ENCODE measurements at regions of chr4 and their contacts with region 1.

Region 1: GRCh38 chr4:3106339-3107186 is 32.1 kb downstream of the HTT start:
- DNase-seq: peak; percentile 43 to 91 (median 69)
- ATAC-seq: peak; percentile 100
- H3K4me3 ChIP-seq: no peak overlapping the region
- H3K4me3 Mint-ChIP-seq: no peak overlapping the region
- H3K27ac ChIP-seq: no peak overlapping the region
- H3K27ac Mint-ChIP-seq: peak overlapping the region in 4 of 9 donors; percentile 38 to 77 (median 56)
- H3K4me1 ChIP-seq: no peaks in the 10 kb centered on the region
- H3K4me1 Mint-ChIP-seq: peaks cover 5 to 19% (median 10%) of the 10 kb centered on the region in 7 donors
- H3K27me3 ChIP-seq: no peaks in the 10 kb centered on the region
- H3K27me3 Mint-ChIP-seq: no peaks in the 10 kb centered on the region

Region 2: DNA sequence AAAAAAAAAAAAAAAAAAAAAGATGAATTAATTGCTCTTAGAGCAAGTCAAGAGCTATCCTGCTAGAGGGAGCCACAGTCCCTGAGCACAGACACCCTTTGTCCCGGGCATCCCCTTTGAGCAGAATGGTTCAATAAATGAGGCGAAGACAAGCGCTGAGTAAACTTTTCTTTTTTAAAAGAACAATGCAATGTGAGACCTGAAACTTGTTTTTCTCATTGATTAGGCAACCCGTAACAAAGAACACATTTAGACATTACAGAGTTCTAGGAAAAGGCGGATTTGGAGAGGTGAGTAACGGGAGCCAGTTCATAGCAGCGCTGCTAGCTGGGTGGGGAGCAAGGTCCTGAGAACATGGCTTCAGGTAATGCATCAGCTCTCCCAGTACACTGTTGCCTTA is 97.1 kb before region 1 on chr4:
- CTCF ChIA-PET with region 1: no interaction called
- POLR2A ChIA-PET with region 1: no interaction called
- intact Hi-C with region 1: no loop called
- DNase-seq: no peak
- ATAC-seq: peak; percentile 37
- H3K4me3 ChIP-seq: no peak overlapping the region
- H3K4me3 Mint-ChIP-seq: no peak overlapping the region
- H3K27ac ChIP-seq: no peak overlapping the region
- H3K27ac Mint-ChIP-seq: no peak overlapping the region
- H3K4me1 ChIP-seq: no peaks in the 10 kb centered on the region
- H3K4me1 Mint-ChIP-seq: peaks cover 0 to 12% (median 0%) of the 10 kb centered on the region in 7 donors
- H3K27me3 ChIP-seq: no peaks in the 10 kb centered on the region
- H3K27me3 Mint-ChIP-seq: peaks cover 0 to 4% (median 0%) of the 10 kb centered on the region in 5 donors

Region 3: GRCh38 chr4:3047464-3048286 is 58.9 kb before region 1 on chr4:
- CTCF ChIA-PET with region 1: no interaction called
- POLR2A ChIA-PET with region 1: no interaction called
- intact Hi-C with region 1: loop called (anchors 1 kb)
- DNase-seq: peak; percentile 40 to 75 (median 58)
- ATAC-seq: peak; percentile 79
- H3K4me3 ChIP-seq: peak overlapping the region; percentile 65
- H3K4me3 Mint-ChIP-seq: peak overlapping the region; percentile 62 to 92 (median 83)
- H3K27ac ChIP-seq: peak overlapping the region; percentile 61
- H3K27ac Mint-ChIP-seq: peak overlapping the region; percentile 79 to 90 (median 84)
- H3K4me1 ChIP-seq: peaks cover 16 to 18% of the 10 kb centered on the region in 2 donors
- H3K4me1 Mint-ChIP-seq: peaks cover 17 to 45% (median 35%) of the 10 kb centered on the region in 7 donors
- H3K27me3 ChIP-seq: no peaks in the 10 kb centered on the region
- H3K27me3 Mint-ChIP-seq: peaks cover 0 to 17% (median 0%) of the 10 kb centered on the region in 5 donors

Region 4: GRCh38 chr4:3136453-3136852 is 29.9 kb after region 1 on chr4:
- CTCF ChIA-PET with region 1: interaction called, 3 read pairs
- POLR2A ChIA-PET with region 1: no interaction called
- intact Hi-C with region 1: loop called (anchors 1 kb)
- DNase-seq: peak in 2 of 9 donors; percentile 4 to 11
- ATAC-seq: no peak
- H3K4me3 ChIP-seq: no peak overlapping the region
- H3K4me3 Mint-ChIP-seq: no peak overlapping the region
- H3K27ac ChIP-seq: no peak overlapping the region
- H3K27ac Mint-ChIP-seq: no peak overlapping the region
- H3K4me1 ChIP-seq: no peaks in the 10 kb centered on the region
- H3K4me1 Mint-ChIP-seq: peaks cover 0 to under 1% (median 0%) of the 10 kb centered on the region in 7 donors
- H3K27me3 ChIP-seq: no peaks in the 10 kb centered on the region
- H3K27me3 Mint-ChIP-seq: no peaks in the 10 kb centered on the region

Region 5: DNA sequence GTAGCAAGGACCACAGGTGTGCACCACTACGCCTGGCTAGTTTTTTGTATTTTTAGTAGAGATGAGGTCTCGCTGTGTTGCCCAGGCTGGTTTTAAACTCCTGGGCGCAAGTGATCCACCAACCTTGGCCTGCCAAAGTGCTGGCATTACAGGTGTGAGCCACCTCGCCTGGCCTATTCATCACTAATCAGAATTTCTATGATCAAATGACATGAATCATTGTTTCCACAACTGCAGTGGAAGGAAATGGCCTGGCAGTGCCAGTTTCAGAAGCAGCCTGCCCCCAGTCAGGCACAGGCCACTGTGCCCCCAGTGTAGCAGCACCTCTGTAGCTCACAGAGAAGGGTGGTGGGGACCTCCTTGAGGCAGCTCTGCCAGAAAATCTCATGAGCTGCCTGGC is 76.4 kb after region 1 on chr4:
- CTCF ChIA-PET with region 1: no interaction called
- POLR2A ChIA-PET with region 1: no interaction called
- intact Hi-C with region 1: no loop called
- DNase-seq: no peak
- ATAC-seq: no peak
- H3K4me3 ChIP-seq: no peak overlapping the region
- H3K4me3 Mint-ChIP-seq: no peak overlapping the region
- H3K27ac ChIP-seq: no peak overlapping the region
- H3K27ac Mint-ChIP-seq: no peak overlapping the region
- H3K4me1 ChIP-seq: no peaks in the 10 kb centered on the region
- H3K4me1 Mint-ChIP-seq: peaks cover 0 to 11% (median 0%) of the 10 kb centered on the region in 7 donors
- H3K27me3 ChIP-seq: no peaks in the 10 kb centered on the region
- H3K27me3 Mint-ChIP-seq: no peaks in the 10 kb centered on the region

Region 6: GRCh38 chr4:3193531-3194203 is 87.1 kb after region 1 on chr4:
- CTCF ChIA-PET with region 1: interaction called, 7 read pairs
- POLR2A ChIA-PET with region 1: no interaction called
- intact Hi-C with region 1: loop called (anchors 1 to 5 kb)
- DNase-seq: peak in 6 of 9 donors; percentile 32 to 57 (median 50)
- ATAC-seq: peak; percentile 42
- H3K4me3 ChIP-seq: no peak overlapping the region
- H3K4me3 Mint-ChIP-seq: peak overlapping the region in 5 of 10 donors; percentile 2 to 62 (median 19)
- H3K27ac ChIP-seq: no peak overlapping the region
- H3K27ac Mint-ChIP-seq: peak overlapping the region in 4 of 9 donors; percentile 2 to 49 (median 16)
- H3K4me1 ChIP-seq: peaks cover 42 to 72% of the 10 kb centered on the region in 2 donors
- H3K4me1 Mint-ChIP-seq: peaks cover 46 to 71% (median 62%) of the 10 kb centered on the region in 7 donors
- H3K27me3 ChIP-seq: no peaks in the 10 kb centered on the region
- H3K27me3 Mint-ChIP-seq: no peaks in the 10 kb centered on the region

Region 7: GRCh38 chr4:3346146-3346545 is 239.6 kb after region 1 on chr4:
- CTCF ChIA-PET with region 1: no interaction called
- POLR2A ChIA-PET with region 1: no interaction called
- intact Hi-C with region 1: loop called (anchors 1 to 2 kb)
- DNase-seq: peak in 7 of 9 donors; percentile 46 to 72 (median 63)
- ATAC-seq: peak; percentile 92
- H3K4me3 ChIP-seq: no peak overlapping the region
- H3K4me3 Mint-ChIP-seq: peak overlapping the region in 1 of 10 donors; percentile 1
- H3K27ac ChIP-seq: no peak overlapping the region
- H3K27ac Mint-ChIP-seq: peak overlapping the region in 1 of 9 donors; percentile 34
- H3K4me1 ChIP-seq: peaks cover 4 to 13% of the 10 kb centered on the region in 2 donors
- H3K4me1 Mint-ChIP-seq: peaks cover 8 to 40% (median 34%) of the 10 kb centered on the region in 7 donors
- H3K27me3 ChIP-seq: no peaks in the 10 kb centered on the region
- H3K27me3 Mint-ChIP-seq: no peaks in the 10 kb centered on the region

Region 8: DNA sequence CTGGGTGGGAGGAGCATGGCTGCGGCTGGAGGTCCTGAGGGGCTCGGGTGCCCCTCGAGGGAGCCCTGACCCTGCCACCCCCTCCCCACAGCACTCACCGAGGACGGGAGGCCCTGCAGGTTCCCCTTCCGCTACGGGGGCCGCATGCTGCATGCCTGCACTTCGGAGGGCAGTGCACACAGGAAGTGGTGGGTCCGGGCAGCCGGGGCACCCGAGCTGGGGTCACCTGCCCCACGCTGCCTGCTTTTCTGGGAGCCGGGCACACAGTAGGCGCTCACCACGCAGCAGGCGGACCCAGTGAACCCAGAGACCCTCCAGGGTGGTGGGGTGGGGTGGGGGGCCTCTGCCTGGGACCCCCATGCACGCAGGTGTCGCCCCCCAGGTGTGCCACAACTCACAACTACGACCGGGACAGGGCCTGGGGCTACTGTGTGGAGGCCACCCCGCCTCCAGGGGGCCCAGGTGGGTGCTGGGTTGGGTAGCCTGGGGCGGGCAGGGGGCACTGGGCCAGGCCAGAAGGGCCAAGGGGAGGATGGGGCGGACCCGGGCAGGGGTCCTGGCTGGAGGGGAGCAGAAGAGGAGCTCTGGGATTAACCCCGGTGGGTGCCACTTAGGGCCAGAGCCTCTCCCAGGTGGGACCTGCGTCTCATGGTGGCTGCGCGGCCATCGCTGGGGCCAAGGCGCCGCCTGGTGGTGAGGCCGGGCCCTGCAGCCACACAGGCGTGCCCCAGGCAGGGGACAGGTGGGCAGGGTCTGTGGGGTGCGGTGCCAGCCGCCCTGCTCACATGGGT is 336.6 kb after region 1 on chr4:
- CTCF ChIA-PET with region 1: no interaction called
- POLR2A ChIA-PET with region 1: no interaction called
- intact Hi-C with region 1: loop called in 1 of 2 experiments (anchors 1 kb)
- DNase-seq: peak; percentile 40 to 83 (median 69)
- ATAC-seq: peak; percentile 73
- H3K4me3 ChIP-seq: no peak overlapping the region
- H3K4me3 Mint-ChIP-seq: no peak overlapping the region
- H3K27ac ChIP-seq: no peak overlapping the region
- H3K27ac Mint-ChIP-seq: no peak overlapping the region
- H3K4me1 ChIP-seq: peaks cover 0 to 7% of the 10 kb centered on the region in 2 donors
- H3K4me1 Mint-ChIP-seq: no peaks in the 10 kb centered on the region
- H3K27me3 ChIP-seq: no peaks in the 10 kb centered on the region
- H3K27me3 Mint-ChIP-seq: no peaks in the 10 kb centered on the region

Region 9: DNA sequence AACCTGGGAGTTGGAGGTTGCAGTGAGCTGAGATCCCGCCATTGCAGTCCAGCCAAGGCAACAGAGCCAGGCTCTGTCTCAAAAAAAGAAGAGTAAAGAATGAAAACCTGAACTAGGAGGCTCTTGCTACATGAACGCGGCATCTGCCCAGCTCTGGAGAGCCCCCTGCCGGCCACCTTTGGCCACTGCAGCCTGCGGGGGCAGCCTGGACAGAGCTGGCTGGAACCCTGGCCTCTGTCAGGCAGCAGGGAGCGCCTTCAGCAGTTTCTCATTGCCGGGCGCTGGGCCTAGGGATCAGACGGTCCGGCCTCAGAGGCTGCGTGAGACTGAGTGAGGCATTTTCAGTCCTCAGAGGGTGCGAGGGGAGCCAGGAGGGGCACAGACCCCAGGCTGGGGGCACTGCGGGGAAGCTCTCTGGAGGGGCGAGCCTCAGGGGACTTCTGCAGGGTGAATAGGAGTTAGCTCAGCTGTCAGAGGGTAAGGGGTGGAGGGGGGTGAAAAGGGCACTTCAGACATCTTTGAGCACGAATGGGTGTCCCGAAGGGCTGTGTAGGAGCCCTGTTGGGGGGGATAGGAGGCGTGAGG is 374.1 kb after region 1 on chr4:
- CTCF ChIA-PET with region 1: interaction called, 4 read pairs
- POLR2A ChIA-PET with region 1: no interaction called
- intact Hi-C with region 1: loop called in 1 of 2 experiments (anchors 1 kb)
- DNase-seq: peak; percentile 39 to 84 (median 70)
- ATAC-seq: peak; percentile 80
- H3K4me3 ChIP-seq: no peak overlapping the region
- H3K4me3 Mint-ChIP-seq: no peak overlapping the region
- H3K27ac ChIP-seq: no peak overlapping the region
- H3K27ac Mint-ChIP-seq: peak overlapping the region in 1 of 9 donors; percentile 2
- H3K4me1 ChIP-seq: no peaks in the 10 kb centered on the region
- H3K4me1 Mint-ChIP-seq: peaks cover 0 to 4% (median 0%) of the 10 kb centered on the region in 7 donors
- H3K27me3 ChIP-seq: no peaks in the 10 kb centered on the region
- H3K27me3 Mint-ChIP-seq: peaks cover 3 to 27% (median 18%) of the 10 kb centered on the region in 5 donors